ENCODE measurements at regions of chr2 and their contacts with region 1.

Region 1: GRCh38 chr2:44479122-44479887 is 117.6 kb downstream of the CAMKMT start:
- DNase-seq: no peak
- ATAC-seq: peak; percentile 90

Region 2: DNA sequence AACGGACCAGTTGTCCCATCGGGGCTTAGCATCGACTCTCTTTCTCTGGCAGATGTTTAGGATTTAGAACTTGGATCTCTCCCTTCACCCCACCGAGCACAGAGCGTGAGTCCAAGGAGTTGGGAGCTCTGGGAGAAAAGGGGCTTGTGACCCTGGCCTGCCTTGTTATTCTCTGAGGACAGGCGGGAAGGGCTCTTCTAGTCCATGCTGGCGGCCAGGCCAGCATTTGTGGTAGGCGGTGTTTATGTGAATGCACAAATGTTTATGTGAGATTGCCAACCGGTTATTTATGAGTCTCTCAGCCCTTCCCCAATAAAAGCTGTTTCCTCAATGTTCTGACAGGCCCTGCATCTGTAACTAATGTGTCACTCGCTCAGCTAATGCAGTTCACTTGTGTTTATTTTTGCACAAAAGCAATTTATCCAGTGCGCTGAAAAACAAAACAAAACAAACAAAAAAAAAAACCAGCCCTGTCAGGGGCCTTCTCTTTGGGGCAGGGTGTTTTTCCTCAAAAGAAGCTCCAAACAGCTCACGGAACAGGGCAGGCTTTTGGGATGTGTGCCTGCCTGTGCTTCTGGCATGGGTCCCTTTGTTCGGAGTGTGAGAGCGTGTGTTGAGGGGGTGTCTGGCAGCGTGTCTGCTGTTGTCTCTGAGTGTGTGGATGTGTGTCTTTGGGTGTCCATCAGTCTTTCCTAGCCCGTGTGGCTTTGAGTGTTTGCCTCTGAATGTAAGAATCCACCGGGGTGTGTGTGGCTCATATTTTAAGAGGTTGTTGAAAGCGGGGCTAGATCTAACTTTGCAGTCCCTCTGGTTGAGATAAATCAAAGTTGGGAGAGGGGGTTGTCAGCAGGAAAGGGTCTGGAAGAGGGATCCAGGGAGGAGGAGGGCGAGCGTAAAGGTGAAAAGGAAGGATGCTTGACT is 1634.1 kb before region 1 on chr2:
- intact Hi-C with region 1: no loop called
- DNase-seq: peak; percentile 55
- ATAC-seq: peak; percentile 71

Region 3: DNA sequence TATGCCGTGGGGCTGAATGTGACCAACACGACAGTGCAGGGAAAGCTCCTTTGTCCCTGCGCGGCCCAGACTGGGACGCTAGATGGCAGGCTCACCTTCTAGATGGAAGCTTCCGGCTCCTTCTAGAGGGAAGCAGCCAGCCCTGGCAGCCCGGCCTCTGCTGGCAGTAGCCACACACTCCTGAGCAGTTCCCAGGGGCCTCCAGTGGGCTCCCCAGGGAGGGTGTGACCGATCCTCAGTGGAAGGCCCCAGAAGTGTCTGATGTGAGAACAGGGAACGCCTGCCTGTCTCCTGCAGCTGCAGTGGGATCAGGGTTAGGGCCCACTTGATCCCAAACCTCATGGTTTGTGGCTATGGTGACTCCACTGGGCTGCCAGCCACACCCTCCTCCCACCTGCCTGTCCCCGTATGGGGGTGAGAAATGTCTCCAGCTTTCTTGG is 435.0 kb before region 1 on chr2:
- intact Hi-C with region 1: loop called (anchors 10 kb)
- DNase-seq: peak; percentile 89
- ATAC-seq: peak; percentile 96

Region 4: DNA sequence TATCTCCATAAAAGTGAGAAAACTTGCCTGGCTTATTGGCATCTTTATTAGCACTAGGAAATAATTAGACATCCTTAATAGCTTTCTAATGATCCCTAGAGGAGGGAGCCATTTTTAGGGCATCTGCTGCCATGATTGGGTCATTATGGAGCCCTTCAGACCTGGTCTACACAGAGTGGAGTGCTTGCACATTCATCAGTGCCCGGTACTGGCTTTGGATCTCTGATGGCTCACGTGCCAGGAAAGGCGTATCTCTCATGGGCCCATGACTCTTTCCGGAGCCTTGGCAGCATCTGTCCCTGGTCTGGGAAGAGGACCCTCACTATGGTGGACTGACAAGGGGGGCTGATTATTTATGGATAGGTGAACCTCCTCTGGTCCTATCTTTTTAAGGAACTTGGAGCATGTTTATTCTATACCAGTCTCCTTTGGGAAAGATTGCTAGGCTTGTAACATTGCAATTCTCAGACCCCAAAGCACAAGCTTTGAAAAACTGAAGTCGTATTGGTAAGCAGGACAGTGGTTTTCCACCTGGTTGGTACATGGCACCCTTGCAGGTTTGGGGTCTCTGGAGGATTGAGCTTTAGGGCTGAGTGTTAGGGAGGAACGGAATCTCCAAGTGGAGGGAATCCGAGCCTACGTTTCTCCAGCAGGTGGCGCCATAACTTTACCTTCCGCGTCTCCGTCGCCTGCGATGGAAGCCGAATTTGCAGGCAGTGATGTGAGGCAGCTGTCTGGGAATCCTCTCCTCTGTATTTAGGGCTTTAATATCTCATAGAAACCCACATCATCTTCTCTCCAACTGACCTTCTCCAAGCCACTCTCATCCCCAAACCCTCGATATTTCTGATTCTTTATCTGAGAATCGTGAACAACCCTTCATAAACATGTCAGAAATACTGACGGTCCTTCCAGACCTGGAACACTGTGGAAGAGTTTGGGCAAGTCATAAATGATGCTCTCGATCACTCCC is 502.1 kb after region 1 on chr2:
- intact Hi-C with region 1: no loop called
- DNase-seq: peak; percentile 91
- ATAC-seq: peak; percentile 86

Measured in sciatic nerve (tissue), 2 donors.